ENCODE measurements at regions of chr20 and their contacts with region 1.

Region 1: DNA sequence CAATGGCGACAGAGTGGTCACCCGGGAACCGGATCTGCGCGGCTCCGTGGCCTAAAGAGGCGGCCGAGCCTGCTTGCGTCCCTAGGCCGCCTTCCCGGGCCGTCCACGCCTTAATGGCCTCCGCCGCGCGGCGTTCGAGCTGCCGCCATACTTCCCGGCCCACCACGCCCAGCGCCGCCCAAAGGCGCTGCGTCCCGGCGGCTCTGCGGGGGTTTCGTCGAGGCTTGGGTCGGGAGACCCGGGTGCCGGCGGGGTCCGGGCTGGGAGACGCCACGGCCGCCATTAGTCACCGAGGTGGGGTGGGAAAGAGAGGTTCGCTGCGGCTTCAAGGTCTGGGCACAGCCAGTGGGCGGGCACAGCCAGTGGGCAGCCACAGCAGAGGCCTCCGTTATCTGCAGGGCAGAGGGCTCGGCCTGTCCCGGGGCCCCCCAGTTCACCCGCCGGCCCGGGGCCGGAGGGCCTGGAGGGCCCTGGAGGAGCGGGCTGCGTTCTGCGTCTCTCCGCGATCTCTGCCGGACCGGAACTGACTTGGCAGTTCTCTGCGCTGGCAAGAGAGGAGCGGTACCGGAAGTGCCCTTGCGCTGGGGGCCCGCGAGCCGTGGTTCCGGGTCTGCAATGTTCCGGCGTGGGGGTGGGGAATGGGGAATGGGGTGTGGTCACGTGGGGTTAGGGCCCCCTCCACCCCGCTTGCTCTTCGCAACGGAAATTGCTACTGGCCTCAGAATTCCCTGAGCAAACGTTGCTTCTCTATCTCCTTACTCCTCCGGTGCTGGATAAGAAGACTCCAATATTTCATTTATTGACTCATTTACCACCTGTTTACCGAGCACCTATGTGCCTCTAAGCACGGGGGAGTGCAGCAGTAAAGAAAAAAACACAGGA is 82.3 kb downstream of the CNBD2 start:
- H3K4me3 Mint-ChIP-seq: peak overlapping the region; percentile 81
- H3K27ac Mint-ChIP-seq: peak overlapping the region; percentile 85
- H3K4me1 Mint-ChIP-seq: peaks cover 39% of the 10 kb centered on the region
- H3K27me3 Mint-ChIP-seq: peaks cover 2% of the 10 kb centered on the region

Region 2: GRCh38 chr20:36035745-36036144 is 14.9 kb before region 1 on chr20:
- intact Hi-C with region 1: no loop called
- H3K4me3 Mint-ChIP-seq: no peak overlapping the region
- H3K27ac Mint-ChIP-seq: no peak overlapping the region
- H3K4me1 Mint-ChIP-seq: no peaks in the 10 kb centered on the region
- H3K27me3 Mint-ChIP-seq: no peaks in the 10 kb centered on the region

Region 3: DNA sequence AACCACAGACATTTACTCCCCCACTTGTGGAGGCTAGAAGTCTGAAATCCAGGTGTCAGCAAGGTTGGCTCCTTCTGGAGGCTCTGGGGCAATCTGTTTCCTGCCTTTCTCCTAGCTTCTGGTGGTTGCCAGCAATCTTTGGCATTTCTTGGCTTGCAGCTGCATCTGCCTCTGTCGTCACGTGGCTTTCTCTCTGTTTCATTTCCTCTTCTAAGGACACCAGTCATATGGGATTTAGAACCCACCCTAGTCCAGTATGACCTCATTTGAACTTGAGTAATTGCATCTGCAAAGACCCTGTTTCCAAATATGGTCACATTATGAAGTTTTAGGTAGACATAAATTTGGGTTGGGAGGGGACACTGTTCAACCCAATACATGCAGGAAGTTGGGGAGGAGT is 47.7 kb after region 1 on chr20:
- intact Hi-C with region 1: loop called (anchors 2 kb)
- H3K4me3 Mint-ChIP-seq: no peak overlapping the region
- H3K27ac Mint-ChIP-seq: peak overlapping the region; percentile 94
- H3K4me1 Mint-ChIP-seq: peaks cover 73% of the 10 kb centered on the region
- H3K27me3 Mint-ChIP-seq: peaks cover 31% of the 10 kb centered on the region